Activated B cell treated with CpG ODN at 0.5 μM for 24 hours (primary cell): ENCODE measurements at regions of chr16 and their contacts with region 1.

Region 1: DNA sequence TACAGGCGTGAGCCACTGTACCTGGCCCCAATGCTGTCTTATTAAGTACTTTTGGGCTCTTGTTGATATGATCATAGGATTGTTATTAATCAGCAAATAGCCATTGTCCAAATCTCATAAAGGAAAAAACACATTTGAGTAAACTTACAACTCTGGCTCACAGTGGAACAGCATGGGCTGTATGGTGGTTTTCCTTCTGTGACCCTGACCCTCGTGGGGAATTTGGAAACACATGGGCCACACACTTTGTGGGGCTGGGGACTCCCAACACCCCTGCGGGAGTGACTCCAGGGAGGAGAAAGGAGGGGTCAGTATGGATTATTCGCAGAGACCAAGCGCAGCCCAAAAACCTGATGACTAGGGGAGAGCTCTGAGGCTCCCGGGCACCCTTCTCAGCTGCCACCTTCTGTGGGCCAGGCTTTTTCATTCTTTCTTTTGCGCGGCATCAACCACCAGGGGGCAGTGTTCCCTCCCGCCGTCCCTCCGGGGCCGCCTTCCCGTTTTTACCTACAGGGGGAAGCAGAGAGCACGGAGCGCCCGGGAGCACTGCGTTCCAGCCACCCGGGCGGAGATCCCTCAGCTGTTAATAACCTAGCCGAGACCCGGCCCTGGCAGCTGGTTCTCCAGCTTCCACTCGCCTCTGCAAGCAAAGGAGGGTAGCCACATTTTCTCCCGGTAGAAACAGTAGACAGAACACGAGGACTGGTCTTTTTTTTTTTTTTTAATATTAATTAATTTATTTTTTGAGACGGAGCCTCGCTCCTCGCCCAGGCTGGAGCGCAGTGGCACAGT is 9.7 kb downstream of the TSNAXIP1 start:
- DNase-seq: peak; percentile 92
- ATAC-seq: peak; percentile 98
- H3K4me3 Mint-ChIP-seq: peak overlapping the region; percentile 65
- H3K27ac Mint-ChIP-seq: peak overlapping the region; percentile 24
- H3K4me1 Mint-ChIP-seq: peaks cover 6% of the 10 kb centered on the region
- H3K27me3 Mint-ChIP-seq: no peaks in the 10 kb centered on the region
- CTCF ChIP-seq: peak; percentile 94

Region 2: DNA sequence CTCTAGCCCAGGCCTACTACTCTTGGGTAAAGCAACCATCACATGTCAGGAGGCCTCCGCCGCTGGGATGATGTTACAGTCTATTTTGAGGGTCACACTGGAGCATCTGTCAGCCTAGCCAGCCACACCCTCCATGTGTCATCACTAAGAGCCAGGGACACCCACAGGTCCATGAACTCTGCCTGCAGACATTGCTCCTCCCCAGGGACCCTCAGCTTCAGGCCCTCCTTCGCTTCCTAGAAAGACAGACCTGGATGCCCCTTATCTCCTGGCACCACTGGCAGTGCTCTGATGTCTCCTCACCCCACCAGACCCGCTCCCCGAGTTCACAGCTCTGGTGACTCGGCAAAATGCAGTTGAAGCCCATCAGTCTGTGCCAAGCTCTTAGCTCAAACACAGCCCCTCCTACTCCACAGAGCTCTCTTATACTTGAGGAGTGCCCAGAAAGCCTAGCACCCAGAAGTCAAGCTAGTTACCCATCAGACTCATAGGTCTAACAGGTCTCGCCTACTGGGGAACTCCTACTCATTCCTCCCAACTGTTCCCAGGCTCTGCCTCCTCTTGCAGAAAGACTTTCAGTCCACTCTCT is 16.0 kb before region 1 on chr16:
- CTCF ChIA-PET with region 1: interaction called, 17 read pairs
- POLR2A ChIA-PET with region 1: no interaction called
- intact Hi-C with region 1: no loop called
- DNase-seq: no peak
- ATAC-seq: no peak
- H3K4me3 Mint-ChIP-seq: no peak overlapping the region
- H3K27ac Mint-ChIP-seq: peak overlapping the region; percentile 56
- H3K4me1 Mint-ChIP-seq: peaks cover 72% of the 10 kb centered on the region
- H3K27me3 Mint-ChIP-seq: no peaks in the 10 kb centered on the region
- CTCF ChIP-seq: no peak

Region 3: DNA sequence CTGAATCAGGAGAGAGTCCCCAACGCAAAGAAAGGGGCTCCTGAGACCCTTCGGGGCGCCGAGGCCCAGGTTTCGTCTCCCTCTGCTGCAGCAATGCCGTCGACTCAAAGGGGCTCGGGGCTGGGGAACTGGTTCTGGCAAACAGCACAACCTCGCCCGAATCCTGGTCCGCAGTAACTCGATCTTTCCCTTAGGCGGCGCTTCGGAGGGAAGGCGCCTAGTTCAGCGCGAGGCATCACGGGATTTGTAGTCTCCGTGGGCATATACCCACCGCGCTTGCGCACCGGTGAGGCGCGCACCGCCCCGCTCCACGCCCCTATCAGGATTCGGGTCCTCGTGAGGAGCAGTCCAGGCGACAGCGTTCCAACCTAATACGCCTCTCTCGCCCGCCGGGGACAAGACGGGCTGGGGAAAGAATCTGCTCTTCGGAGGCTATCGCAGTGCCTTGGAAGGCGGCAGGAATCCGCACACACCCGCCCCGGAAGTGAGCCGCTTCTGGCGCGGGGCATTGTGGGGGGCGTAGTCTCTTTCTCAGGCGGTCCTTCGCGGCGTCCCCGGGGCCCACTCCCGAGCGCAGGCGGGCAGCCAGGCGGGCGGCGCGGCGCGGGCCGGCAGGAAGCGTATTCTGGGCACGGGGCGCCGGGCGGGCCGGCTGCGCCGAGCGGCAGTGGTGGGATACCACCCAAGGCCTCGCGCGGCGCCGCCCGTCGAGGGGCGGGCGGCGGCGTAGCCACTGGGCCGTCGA is 25.5 kb after region 1 on chr16 and contains the start of gene THAP11:
- CTCF ChIA-PET with region 1: interaction called, 13 read pairs
- POLR2A ChIA-PET with region 1: no interaction called
- intact Hi-C with region 1: loop called (anchors 1 kb)
- DNase-seq: peak; percentile 95
- ATAC-seq: peak; percentile 54
- H3K4me3 Mint-ChIP-seq: peak within 1 kb of the TSS; percentile 95
- H3K27ac Mint-ChIP-seq: peak within 1 kb of the TSS; percentile 95
- H3K4me1 Mint-ChIP-seq: peaks cover 43% of the 10 kb centered on the region
- H3K27me3 Mint-ChIP-seq: no peaks in the 10 kb centered on the region
- CTCF ChIP-seq: peak; percentile 38
- total RNA-seq, gene THAP11: 24.2 and 24.9 TPM in 2 replicates

Region 4: GRCh38 chr16:67872786-67873537 is 56.5 kb after region 1 on chr16 and contains the start of gene EDC4:
- CTCF ChIA-PET with region 1: interaction called, 6 read pairs
- POLR2A ChIA-PET with region 1: no interaction called
- intact Hi-C with region 1: loop called (anchors 2 kb)
- DNase-seq: peak; percentile 89
- ATAC-seq: peak; percentile 93
- H3K4me3 Mint-ChIP-seq: peak within 1 kb of the TSS; percentile 90
- H3K27ac Mint-ChIP-seq: peak within 1 kb of the TSS; percentile 84
- H3K4me1 Mint-ChIP-seq: peaks cover 36% of the 10 kb centered on the region
- H3K27me3 Mint-ChIP-seq: no peaks in the 10 kb centered on the region
- CTCF ChIP-seq: no peak
- total RNA-seq, gene EDC4: 71.5 TPM in 2 replicates

Region 5: GRCh38 chr16:68064791-68065365 is 248.4 kb after region 1 on chr16:
- CTCF ChIA-PET with region 1: interaction called, 9 read pairs
- POLR2A ChIA-PET with region 1: no interaction called
- intact Hi-C with region 1: loop called (anchors 1 kb)
- DNase-seq: peak; percentile 52
- ATAC-seq: peak; percentile 93
- H3K4me3 Mint-ChIP-seq: no peak overlapping the region
- H3K27ac Mint-ChIP-seq: no peak overlapping the region
- H3K4me1 Mint-ChIP-seq: peaks cover 27% of the 10 kb centered on the region
- H3K27me3 Mint-ChIP-seq: no peaks in the 10 kb centered on the region
- CTCF ChIP-seq: no peak